Activated naive CD4-positive, alpha-beta T cell treated with anti-CD3 and anti-CD28 coated beads, Interleukin-2, amount 10 ng/mL, durations not matched to agents 7 days and 5 days (primary cell): ENCODE measurements at regions of chr5 and their contacts with region 1.

Region 1: GRCh38 chr5:154405078-154405792 is 40.6 kb upstream of the SAP30L start:
- DNase-seq: peak; percentile 80
- H3K4me3 Mint-ChIP-seq: peak overlapping the region; percentile 15
- H3K27ac Mint-ChIP-seq: no peak overlapping the region
- H3K4me1 Mint-ChIP-seq: peaks cover 8% of the 10 kb centered on the region
- H3K27me3 Mint-ChIP-seq: no peaks in the 10 kb centered on the region

Region 2: DNA sequence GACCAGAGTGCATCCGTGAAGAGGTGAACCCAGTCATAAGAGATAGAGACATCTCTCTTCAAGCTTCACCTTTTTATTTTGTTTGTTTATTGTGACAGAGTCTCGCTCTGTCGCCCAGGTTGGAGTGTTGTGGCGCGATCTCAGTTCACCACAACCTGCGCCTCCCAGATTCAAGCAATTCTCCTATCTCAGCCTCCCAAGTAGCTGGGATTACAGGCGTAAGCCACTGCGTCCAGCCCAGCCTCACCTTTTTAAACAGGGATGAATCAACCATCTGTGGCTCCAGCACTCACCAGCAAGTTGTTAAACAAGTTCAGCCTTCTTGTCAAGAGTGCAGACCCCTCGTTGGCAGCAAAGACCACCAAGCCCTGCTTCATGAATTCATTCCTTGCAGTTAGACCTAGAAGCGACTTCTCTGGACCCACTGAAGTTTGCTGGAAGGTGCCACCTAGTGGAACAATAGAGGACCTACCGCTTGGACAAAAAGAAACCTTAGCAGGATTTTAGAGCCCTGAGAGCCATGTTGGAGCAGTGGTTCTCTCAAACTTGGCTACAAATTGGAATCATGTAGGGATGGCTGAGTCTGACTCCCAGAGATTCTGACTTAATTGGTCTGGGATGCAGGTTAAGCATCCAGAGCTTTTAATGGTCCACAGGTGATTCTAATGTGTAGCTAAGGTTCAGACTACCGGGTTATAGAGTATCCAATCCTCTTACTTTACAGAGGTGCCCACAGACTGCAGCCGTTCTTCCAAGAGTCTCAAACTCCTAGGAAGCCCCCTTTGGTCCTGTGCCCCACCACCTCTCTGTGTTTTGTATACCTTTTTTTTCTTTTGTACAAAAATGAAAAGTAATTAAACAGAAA is 225.2 kb before region 1 on chr5:
- CTCF ChIA-PET with region 1: interaction called, 26 read pairs
- DNase-seq: peak; percentile 52
- H3K4me3 Mint-ChIP-seq: no peak overlapping the region
- H3K27ac Mint-ChIP-seq: no peak overlapping the region
- H3K4me1 Mint-ChIP-seq: peaks cover 8% of the 10 kb centered on the region
- H3K27me3 Mint-ChIP-seq: peaks cover 36% of the 10 kb centered on the region

Region 3: GRCh38 chr5:154189819-154190594 is 215.2 kb before region 1 on chr5:
- CTCF ChIA-PET with region 1: interaction called, 14 read pairs
- DNase-seq: peak; percentile 87
- H3K4me3 Mint-ChIP-seq: peak overlapping the region; percentile 82
- H3K27ac Mint-ChIP-seq: peak overlapping the region; percentile 72
- H3K4me1 Mint-ChIP-seq: peaks cover 34% of the 10 kb centered on the region
- H3K27me3 Mint-ChIP-seq: peaks cover 13% of the 10 kb centered on the region

Region 4: GRCh38 chr5:154196955-154197652 is 208.1 kb before region 1 on chr5:
- CTCF ChIA-PET with region 1: interaction called, 25 read pairs
- DNase-seq: no peak
- H3K4me3 Mint-ChIP-seq: no peak overlapping the region
- H3K27ac Mint-ChIP-seq: peak overlapping the region; percentile 87
- H3K4me1 Mint-ChIP-seq: peaks cover 63% of the 10 kb centered on the region
- H3K27me3 Mint-ChIP-seq: no peaks in the 10 kb centered on the region

Region 5: DNA sequence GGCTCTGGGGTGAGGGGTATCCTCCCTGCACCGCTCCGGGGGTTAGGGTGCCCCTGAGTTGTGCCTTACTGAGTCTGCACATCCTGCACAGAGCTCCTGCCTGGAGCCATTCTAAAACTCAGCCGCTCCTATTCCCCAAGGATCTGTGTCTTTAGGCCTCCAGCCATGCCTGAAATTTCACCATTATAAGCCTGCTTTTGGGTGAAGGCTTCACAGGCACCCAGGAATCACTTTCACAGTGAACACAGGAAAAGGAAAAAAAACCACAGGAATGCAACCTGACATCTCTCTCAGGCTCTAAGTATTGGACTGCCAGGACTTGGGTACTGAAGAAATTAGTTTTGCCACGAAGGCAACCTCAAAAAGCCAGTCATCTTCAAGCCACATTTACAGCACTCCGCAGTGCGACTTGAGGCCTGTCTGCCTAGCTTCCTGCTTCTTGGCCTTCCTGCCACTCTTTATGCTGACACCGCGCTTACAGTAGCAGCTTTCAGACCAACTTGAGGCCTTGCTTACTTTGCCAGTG is 183.8 kb before region 1 on chr5:
- CTCF ChIA-PET with region 1: no interaction called
- DNase-seq: peak; percentile 66
- H3K4me3 Mint-ChIP-seq: no peak overlapping the region
- H3K27ac Mint-ChIP-seq: peak overlapping the region; percentile 78
- H3K4me1 Mint-ChIP-seq: peaks cover 35% of the 10 kb centered on the region
- H3K27me3 Mint-ChIP-seq: no peaks in the 10 kb centered on the region